HepG2 (cell line): ENCODE measurements at regions of chr17 and their contacts with region 1.

Region 1: DNA sequence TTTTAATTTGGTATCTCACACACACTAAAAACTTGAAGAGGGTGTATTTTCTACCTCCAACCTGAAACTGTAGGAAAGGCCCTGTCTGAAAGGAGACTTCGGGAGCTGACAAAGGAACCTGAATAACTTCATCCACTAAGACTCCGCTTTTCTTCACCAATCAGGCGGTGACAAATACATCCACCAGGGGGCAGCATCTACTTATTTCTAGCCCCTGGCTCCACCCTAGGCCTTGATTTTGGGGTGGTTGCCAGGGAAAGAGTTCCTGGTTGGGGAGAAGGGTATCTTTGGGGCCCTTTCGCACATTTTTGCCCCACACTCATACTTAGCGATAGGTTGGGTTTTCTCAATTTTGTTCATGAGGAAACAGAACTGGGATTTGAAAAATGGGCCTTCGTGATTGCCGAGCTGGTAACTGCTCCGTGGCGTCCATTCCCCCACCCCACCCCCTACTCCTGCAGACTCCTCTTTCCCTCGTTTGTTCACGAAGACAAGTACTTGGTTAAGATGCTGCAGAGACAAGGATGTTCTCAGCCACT is 4.8 kb upstream of the ARL4D start:
- DNase-seq: peak; percentile 83
- ATAC-seq: peak; percentile 60
- H3K4me3 ChIP-seq: no peak overlapping the region
- H3K27ac ChIP-seq: peak overlapping the region; percentile 55
- H3K4me1 ChIP-seq: peaks cover 64% of the 10 kb centered on the region
- H3K27me3 ChIP-seq: no peaks in the 10 kb centered on the region
- CTCF ChIP-seq: peak; percentile 96
- EP300 ChIP-seq: 0 out of 4 replicates have a peak, but pooled peaks of 1 of the 2 experiments have one; percentile 11
- POLR2A ChIP-seq: no peak
- RAD21 ChIP-seq: peak; percentile 99

Region 2: DNA sequence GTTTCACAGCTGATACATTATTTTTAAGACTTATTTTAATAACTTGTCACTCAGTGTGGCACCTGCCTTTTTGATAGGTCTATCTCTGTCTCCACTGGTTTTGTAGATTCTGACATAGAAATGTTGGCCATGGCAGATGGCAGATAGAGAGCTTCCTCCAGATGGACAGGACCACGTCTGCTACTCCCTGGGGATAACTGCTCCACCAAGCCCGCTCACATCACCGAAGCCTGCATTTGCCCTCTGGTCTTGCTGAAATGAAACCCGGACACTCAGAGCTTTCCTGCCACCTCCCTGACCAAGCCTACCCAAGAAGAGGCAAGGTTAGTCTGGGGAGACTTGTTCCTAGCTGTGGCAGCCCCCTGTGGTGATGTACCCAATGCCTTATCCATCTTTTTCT is 1643.2 kb before region 1 on chr17:
- CTCF ChIA-PET with region 1: no interaction called
- POLR2A ChIA-PET with region 1: no interaction called
- in situ Hi-C with region 1: no loop called
- intact Hi-C with region 1: no loop called
- DNase-seq: no peak
- ATAC-seq: no peak
- H3K4me3 ChIP-seq: no peak overlapping the region
- H3K27ac ChIP-seq: no peak overlapping the region
- H3K4me1 ChIP-seq: peaks cover 40% of the 10 kb centered on the region
- H3K27me3 ChIP-seq: no peaks in the 10 kb centered on the region; a peak in 1 of 5 replicates
- CTCF ChIP-seq: no peak
- EP300 ChIP-seq: no peak
- POLR2A ChIP-seq: no peak
- RAD21 ChIP-seq: no peak

Region 3: GRCh38 chr17:43406676-43407645 is 12.9 kb after region 1 on chr17:
- CTCF ChIA-PET with region 1: no interaction called
- POLR2A ChIA-PET with region 1: interaction called, 71 read pairs
- in situ Hi-C with region 1: no loop called
- intact Hi-C with region 1: no loop called
- DNase-seq: no peak
- ATAC-seq: no peak
- H3K4me3 ChIP-seq: no peak overlapping the region
- H3K27ac ChIP-seq: no peak overlapping the region
- H3K4me1 ChIP-seq: peaks cover 64% of the 10 kb centered on the region
- H3K27me3 ChIP-seq: no peaks in the 10 kb centered on the region
- CTCF ChIP-seq: no peak
- EP300 ChIP-seq: no peak
- POLR2A ChIP-seq: no peak
- RAD21 ChIP-seq: no peak

Region 4: GRCh38 chr17:43423777-43424455 is 29.9 kb after region 1 on chr17:
- CTCF ChIA-PET with region 1: interaction called, 11 read pairs
- POLR2A ChIA-PET with region 1: interaction called, 29 read pairs
- in situ Hi-C with region 1: no loop called
- intact Hi-C with region 1: no loop called
- DNase-seq: no peak
- ATAC-seq: peak; percentile 63
- H3K4me3 ChIP-seq: no peak overlapping the region
- H3K27ac ChIP-seq: no peak overlapping the region
- H3K4me1 ChIP-seq: peaks cover 62% of the 10 kb centered on the region
- H3K27me3 ChIP-seq: peaks cover 0 to 4% of the 10 kb centered on the region in 2 experiments; a peak in 1 of 5 replicates
- CTCF ChIP-seq: no peak
- EP300 ChIP-seq: no peak
- POLR2A ChIP-seq: no peak
- RAD21 ChIP-seq: no peak

Region 5: GRCh38 chr17:43449470-43450248 is 55.6 kb after region 1 on chr17:
- CTCF ChIA-PET with region 1: no interaction called
- POLR2A ChIA-PET with region 1: interaction called, 38 read pairs
- in situ Hi-C with region 1: no loop called
- intact Hi-C with region 1: no loop called
- DNase-seq: peak; percentile 97
- ATAC-seq: peak; percentile 96
- H3K4me3 ChIP-seq: peak overlapping the region; percentile 15 to 52 (median 32); a peak in 5 of 6 replicates
- H3K27ac ChIP-seq: peak overlapping the region; percentile 89
- H3K4me1 ChIP-seq: peaks cover 52% of the 10 kb centered on the region
- H3K27me3 ChIP-seq: no peaks in the 10 kb centered on the region
- CTCF ChIP-seq: peak; percentile 1; the same call in 1 of the 2 replicates
- EP300 ChIP-seq: peak; percentile 82 to 91
- POLR2A ChIP-seq: no peak
- RAD21 ChIP-seq: no peak

Region 6: DNA sequence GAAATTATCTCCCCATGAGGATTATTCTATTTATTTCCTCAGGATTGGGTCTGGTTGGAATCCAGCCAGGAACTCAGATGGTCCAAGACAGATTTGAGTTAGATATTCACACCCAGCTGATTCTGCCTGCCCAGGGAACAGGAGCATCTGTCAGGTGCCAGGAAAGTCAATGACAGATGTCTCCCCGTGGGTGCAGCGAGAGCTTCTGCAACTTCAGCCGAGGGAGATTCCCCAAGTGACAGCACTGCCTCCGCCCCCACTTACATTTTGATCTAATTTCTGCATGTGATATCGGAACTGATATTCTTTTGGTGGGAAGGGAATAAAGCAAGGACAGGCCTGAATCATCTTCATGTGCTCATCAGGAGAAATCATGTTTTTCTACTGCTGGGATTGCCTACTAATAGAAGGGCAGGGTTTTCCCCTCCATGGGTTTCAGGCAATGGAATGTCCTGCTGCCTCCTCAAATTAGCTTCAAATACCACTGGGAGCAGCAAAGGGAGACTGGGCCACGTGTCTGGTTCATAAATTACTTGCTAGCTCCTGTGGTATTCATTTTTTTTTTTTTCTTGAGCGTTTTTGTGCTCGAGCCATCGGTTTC is 74.1 kb after region 1 on chr17:
- CTCF ChIA-PET with region 1: no interaction called
- POLR2A ChIA-PET with region 1: interaction called, 56 read pairs
- in situ Hi-C with region 1: no loop called
- intact Hi-C with region 1: no loop called
- DNase-seq: no peak
- ATAC-seq: no peak
- H3K4me3 ChIP-seq: no peak overlapping the region
- H3K27ac ChIP-seq: peak overlapping the region; percentile 94
- H3K4me1 ChIP-seq: peaks cover 79% of the 10 kb centered on the region
- H3K27me3 ChIP-seq: no peaks in the 10 kb centered on the region
- CTCF ChIP-seq: no peak
- EP300 ChIP-seq: no peak
- POLR2A ChIP-seq: no peak
- RAD21 ChIP-seq: no peak

Region 7: DNA sequence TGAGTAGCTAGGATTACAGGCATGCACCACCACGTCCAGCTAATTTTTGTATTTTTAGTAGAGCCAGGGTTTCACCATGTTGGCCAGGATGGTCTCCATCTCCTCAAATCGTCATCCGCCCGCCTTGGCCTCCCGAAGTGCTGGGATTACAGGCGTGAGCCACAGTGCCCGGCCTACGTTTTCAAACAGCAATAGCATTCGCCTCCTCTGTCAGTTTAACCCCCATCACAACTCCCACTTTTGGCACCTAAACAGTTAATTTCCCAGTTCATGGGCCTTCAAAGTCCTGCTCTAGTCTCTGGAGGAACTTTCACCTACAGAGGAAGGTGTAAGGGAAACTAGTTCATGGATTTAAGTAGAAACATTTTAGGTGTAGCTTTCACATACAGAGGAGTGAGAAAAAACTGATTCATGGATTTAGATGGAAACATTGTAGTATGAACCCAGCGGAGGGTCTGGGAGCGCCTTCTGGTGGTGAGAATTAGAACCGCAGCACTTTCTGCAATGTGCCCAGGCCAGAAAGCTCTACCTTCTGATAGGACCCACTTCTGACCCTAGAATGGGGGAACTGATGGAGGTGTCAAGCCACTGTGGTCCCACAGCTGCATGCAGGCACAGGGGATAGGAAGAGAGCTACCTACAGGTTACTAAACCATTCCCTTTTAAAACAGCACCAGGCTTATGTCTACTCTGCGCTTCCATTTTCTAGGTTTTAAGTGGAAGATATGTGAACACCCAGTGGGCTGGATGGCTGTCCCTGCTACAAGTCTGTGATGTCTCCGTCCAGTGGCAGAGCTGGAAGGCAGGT is 279.7 kb after region 1 on chr17:
- CTCF ChIA-PET with region 1: no interaction called
- POLR2A ChIA-PET with region 1: no interaction called
- in situ Hi-C with region 1: no loop called
- intact Hi-C with region 1: loop called (anchors 5 kb)
- DNase-seq: peak; percentile 67
- ATAC-seq: peak; percentile 55
- H3K4me3 ChIP-seq: no peak overlapping the region
- H3K27ac ChIP-seq: no peak overlapping the region
- H3K4me1 ChIP-seq: peaks cover 100% of the 10 kb centered on the region
- H3K27me3 ChIP-seq: no peaks in the 10 kb centered on the region
- CTCF ChIP-seq: peak; percentile 94
- EP300 ChIP-seq: no peak
- POLR2A ChIP-seq: no peak
- RAD21 ChIP-seq: peak; percentile 97